ENCODE measurements at regions of chr2 and their contacts with region 1.

Region 1: GRCh38 chr2:100262555-100263320 is 59.6 kb downstream of the LONRF2 start:
- DNase-seq: peak; percentile 56
- H3K4me3 ChIP-seq: no peak overlapping the region
- H3K27ac ChIP-seq: no peak overlapping the region
- H3K4me1 ChIP-seq: no peaks in the 10 kb centered on the region
- H3K27me3 ChIP-seq: no peaks in the 10 kb centered on the region
- CTCF ChIP-seq: peak; percentile 92 to 94
- POLR2A ChIP-seq: no peak

Region 2: DNA sequence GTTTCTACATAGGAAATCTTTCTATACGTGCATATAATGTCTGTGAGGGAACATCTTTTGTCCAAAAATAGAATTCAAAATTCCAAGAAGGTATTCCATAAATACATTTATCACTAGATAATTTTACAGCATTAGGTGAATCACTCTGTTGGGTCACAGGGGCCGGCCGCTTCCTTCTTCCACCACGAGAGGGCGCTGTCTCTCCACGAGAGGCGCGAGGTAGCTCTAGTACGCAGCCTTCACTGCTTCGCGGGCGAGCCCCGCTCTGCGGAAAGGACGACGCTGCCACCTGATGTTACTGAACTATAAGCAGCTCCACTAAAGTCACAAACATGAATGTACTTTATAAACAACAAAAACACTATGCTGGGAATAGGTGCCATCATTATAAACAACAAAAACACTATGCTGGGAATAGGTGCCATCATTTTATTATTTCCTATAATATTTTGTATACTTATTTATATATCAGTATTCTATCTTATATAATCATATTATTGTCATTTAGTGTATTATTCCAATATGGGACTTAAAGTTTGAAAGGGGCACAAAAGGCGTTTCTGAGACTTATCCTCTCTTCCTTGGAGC is 703.6 kb before region 1 on chr2:
- CTCF ChIA-PET with region 1: interaction called, 237 read pairs
- POLR2A ChIA-PET with region 1: no interaction called
- dilution Hi-C with region 1: no loop called
- intact Hi-C with region 1: loop called (anchors 1 kb)
- DNase-seq: peak; percentile 72
- H3K4me3 ChIP-seq: no peak overlapping the region
- H3K27ac ChIP-seq: no peak overlapping the region
- H3K4me1 ChIP-seq: no peaks in the 10 kb centered on the region
- H3K27me3 ChIP-seq: peaks cover 4 to 14% of the 10 kb centered on the region in 2 experiments
- CTCF ChIP-seq: peak; percentile 91 to 96
- POLR2A ChIP-seq: no peak

Region 3: DNA sequence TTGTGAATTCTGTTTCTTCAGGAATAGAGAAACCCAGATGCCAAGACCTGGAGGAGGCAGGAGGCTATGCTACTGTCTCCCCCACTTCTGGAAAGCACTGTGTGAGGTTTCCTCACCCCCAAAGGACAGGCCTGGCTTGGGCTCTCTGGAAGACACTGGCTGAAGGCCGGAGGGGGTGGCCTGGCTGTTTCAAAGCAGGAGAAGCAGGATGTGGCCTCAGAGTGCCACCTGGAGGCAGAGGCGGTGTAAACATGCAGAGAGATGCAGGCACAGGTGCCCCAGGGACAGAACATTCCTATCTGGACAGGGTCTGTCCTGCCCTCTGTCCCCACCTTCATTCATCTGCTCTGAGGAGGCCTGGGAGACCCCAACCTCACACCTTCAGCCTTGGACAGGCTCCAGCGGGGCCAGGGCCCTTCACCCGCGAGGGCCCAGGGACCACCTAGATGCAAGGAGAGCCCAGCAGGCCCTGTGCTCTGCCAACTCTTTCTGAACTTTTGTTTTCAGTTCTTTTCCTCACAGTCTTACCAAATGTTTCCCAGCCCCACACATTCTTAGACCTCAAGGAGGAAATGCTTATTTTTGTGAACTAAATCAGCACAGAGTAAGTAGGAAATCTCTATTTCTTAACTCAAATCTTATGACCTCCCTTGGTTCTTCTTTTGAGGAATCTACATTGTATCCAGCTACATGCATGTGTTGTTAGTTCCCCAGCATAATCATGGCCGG is 19.7 kb before region 1 on chr2:
- CTCF ChIA-PET with region 1: interaction called, 24 read pairs
- POLR2A ChIA-PET with region 1: no interaction called
- dilution Hi-C with region 1: no loop called
- intact Hi-C with region 1: no loop called
- DNase-seq: peak; percentile 47
- H3K4me3 ChIP-seq: no peak overlapping the region
- H3K27ac ChIP-seq: no peak overlapping the region
- H3K4me1 ChIP-seq: no peaks in the 10 kb centered on the region
- H3K27me3 ChIP-seq: no peaks in the 10 kb centered on the region
- CTCF ChIP-seq: peak; percentile 71 to 80
- POLR2A ChIP-seq: no peak

Region 4: GRCh38 chr2:100285691-100286090 is 23.0 kb after region 1 on chr2:
- CTCF ChIA-PET with region 1: interaction called, 52 read pairs
- POLR2A ChIA-PET with region 1: no interaction called
- dilution Hi-C with region 1: no loop called
- intact Hi-C with region 1: loop called (anchors 2 kb)
- DNase-seq: peak; percentile 85
- H3K4me3 ChIP-seq: no peak overlapping the region
- H3K27ac ChIP-seq: peak overlapping the region; percentile 22
- H3K4me1 ChIP-seq: peaks cover 14% of the 10 kb centered on the region
- H3K27me3 ChIP-seq: peaks cover 3 to 16% of the 10 kb centered on the region in 2 experiments
- CTCF ChIP-seq: no peak
- POLR2A ChIP-seq: no peak

Region 5: GRCh38 chr2:100309973-100310719 is 47.4 kb after region 1 on chr2:
- CTCF ChIA-PET with region 1: interaction called, 14 read pairs
- POLR2A ChIA-PET with region 1: no interaction called
- dilution Hi-C with region 1: no loop called
- intact Hi-C with region 1: no loop called
- DNase-seq: no peak
- H3K4me3 ChIP-seq: no peak overlapping the region
- H3K27ac ChIP-seq: no peak overlapping the region
- H3K4me1 ChIP-seq: no peaks in the 10 kb centered on the region
- H3K27me3 ChIP-seq: peaks cover 0 to 16% of the 10 kb centered on the region in 2 experiments
- CTCF ChIP-seq: no peak
- POLR2A ChIP-seq: no peak

Region 6: DNA sequence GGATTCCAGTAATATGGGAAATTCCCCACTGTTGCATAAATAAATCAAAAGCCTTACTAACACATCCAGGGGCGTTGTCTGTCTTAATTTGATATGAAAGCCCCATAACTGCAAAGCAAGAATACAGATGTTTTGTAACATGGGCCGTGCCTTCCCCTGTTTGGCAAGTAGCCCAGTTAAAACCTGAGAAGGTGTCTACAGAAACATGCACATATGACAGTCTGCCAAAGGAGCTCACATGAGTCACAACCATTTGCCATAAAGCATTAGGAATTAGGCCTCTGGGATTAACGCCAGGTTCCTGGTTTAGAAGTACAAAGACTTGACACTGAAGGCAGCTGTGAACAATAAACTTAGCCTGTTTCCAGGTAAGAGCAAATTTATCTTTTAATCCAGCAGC is 102.7 kb after region 1 on chr2:
- CTCF ChIA-PET with region 1: interaction called, 18 read pairs
- POLR2A ChIA-PET with region 1: no interaction called
- dilution Hi-C with region 1: no loop called
- intact Hi-C with region 1: no loop called
- DNase-seq: no peak
- H3K4me3 ChIP-seq: no peak overlapping the region
- H3K27ac ChIP-seq: no peak overlapping the region
- H3K4me1 ChIP-seq: no peaks in the 10 kb centered on the region
- H3K27me3 ChIP-seq: no peaks in the 10 kb centered on the region
- CTCF ChIP-seq: no peak
- POLR2A ChIP-seq: no peak

Region 7: GRCh38 chr2:100391735-100392515 is 129.2 kb after region 1 on chr2:
- CTCF ChIA-PET with region 1: interaction called, 44 read pairs
- POLR2A ChIA-PET with region 1: no interaction called
- dilution Hi-C with region 1: no loop called
- intact Hi-C with region 1: no loop called
- DNase-seq: no peak
- H3K4me3 ChIP-seq: no peak overlapping the region
- H3K27ac ChIP-seq: no peak overlapping the region
- H3K4me1 ChIP-seq: no peaks in the 10 kb centered on the region
- H3K27me3 ChIP-seq: no peaks in the 10 kb centered on the region
- CTCF ChIP-seq: no peak
- POLR2A ChIP-seq: no peak

Measured in endothelial cell of umbilical vein (primary cell).